ENCODE measurements at regions of chr14 and their contacts with region 1.

Region 1: GRCh38 chr14:70907176-70907995 is at the start of gene PCNX1:
- DNase-seq: peak; percentile 90
- ATAC-seq: peak; percentile 80
- H3K4me3 Mint-ChIP-seq: peak within 1 kb of the TSS; percentile 97
- H3K27ac Mint-ChIP-seq: peak within 1 kb of the TSS; percentile 92
- H3K4me1 Mint-ChIP-seq: peaks cover 64% of the 10 kb centered on the region
- H3K27me3 Mint-ChIP-seq: no peaks in the 10 kb centered on the region
- CTCF ChIP-seq: peak; percentile 76
- total RNA-seq, gene PCNX1: 32.7 to 42.6 TPM

Region 2: DNA sequence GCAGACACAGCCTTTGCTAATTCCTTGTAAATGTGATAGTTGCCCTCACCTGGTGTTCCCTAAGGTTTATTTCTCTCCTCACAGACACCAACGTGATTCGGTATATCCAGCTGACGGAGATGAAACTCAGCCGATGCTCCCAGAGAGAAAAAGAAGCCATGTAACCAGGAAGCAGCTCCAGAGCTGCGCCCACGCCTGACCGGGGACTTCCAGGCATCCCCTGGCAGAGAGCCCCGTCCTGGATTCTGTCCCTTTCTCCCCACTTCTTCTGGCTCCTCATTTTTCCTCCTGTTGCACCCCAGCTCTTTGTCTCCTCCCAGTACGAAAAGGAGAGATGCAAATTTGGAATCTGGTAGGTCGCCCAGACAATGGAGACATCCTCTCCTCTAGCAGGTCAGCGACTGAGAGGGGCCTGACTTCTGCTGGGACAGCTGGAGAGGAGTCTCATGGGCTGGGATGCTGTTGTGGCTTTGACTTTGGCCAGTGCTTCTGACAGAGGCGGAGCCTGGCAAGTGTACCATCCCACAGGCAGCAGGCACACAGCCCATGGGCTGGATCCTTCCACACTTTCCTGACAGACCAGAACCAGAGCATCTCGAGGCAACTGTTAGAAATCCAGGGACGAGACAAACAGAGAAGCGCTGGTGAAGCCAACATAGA is 236.3 kb before region 1 on chr14:
- CTCF ChIA-PET with region 1: no interaction called
- POLR2A ChIA-PET with region 1: no interaction called
- intact Hi-C with region 1: no loop called
- DNase-seq: no peak
- ATAC-seq: no peak
- H3K4me3 Mint-ChIP-seq: no peak overlapping the region
- H3K27ac Mint-ChIP-seq: no peak overlapping the region
- H3K4me1 Mint-ChIP-seq: peaks cover 10% of the 10 kb centered on the region
- H3K27me3 Mint-ChIP-seq: no peaks in the 10 kb centered on the region
- CTCF ChIP-seq: no peak

Region 3: DNA sequence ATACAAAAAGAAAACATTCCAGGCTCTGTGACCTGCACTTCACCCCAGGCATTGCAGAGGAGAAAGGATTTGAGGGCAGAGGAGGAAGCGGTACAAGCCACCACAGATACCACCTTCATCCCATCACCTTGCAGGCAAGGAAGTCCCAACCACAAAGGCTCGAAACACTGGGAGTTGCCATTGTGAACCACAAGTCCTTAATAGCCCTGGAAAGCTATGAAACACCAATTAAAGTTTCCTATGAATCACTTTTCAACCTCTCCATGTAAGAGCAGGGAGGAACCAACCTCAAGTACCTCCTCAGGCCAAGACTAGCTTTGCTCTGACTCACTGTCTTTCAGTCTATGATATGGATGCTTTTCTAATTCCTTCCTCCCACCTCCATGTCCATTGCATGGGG is 125.0 kb before region 1 on chr14:
- CTCF ChIA-PET with region 1: no interaction called
- POLR2A ChIA-PET with region 1: no interaction called
- intact Hi-C with region 1: no loop called
- DNase-seq: no peak
- ATAC-seq: no peak
- H3K4me3 Mint-ChIP-seq: no peak overlapping the region
- H3K27ac Mint-ChIP-seq: no peak overlapping the region
- H3K4me1 Mint-ChIP-seq: peaks cover 20% of the 10 kb centered on the region
- H3K27me3 Mint-ChIP-seq: no peaks in the 10 kb centered on the region
- CTCF ChIP-seq: no peak

Region 4: GRCh38 chr14:70816525-70816924 is 90.9 kb before region 1 on chr14:
- CTCF ChIA-PET with region 1: interaction called, 47 read pairs
- POLR2A ChIA-PET with region 1: interaction called, 3 read pairs
- intact Hi-C with region 1: no loop called
- DNase-seq: no peak
- ATAC-seq: no peak
- H3K4me3 Mint-ChIP-seq: no peak overlapping the region
- H3K27ac Mint-ChIP-seq: no peak overlapping the region
- H3K4me1 Mint-ChIP-seq: peaks cover 12% of the 10 kb centered on the region
- H3K27me3 Mint-ChIP-seq: peaks cover 15% of the 10 kb centered on the region
- CTCF ChIP-seq: no peak

Region 5: DNA sequence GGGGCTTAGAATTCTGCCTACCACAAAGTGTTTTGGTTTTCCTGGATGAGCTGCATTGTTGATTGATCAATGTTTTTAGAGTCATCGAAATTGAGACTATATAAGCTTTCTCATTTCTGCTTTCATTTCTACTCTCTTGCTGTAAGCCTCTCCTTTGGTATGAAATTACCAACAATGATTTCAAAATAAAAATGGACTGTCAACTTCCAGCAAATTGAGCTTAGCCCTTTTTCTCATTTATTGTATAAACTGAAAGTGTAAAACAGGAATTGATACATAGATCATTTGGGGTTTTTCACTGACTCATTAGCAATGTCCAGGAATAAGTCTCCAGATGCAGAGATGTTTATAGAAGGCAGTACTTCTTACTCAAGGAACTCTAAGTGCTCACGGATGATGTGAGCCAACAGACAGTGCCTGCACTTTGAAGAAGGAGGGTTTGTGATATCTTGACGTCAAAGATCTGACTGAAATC is 20.1 kb before region 1 on chr14:
- CTCF ChIA-PET with region 1: interaction called, 93 read pairs
- POLR2A ChIA-PET with region 1: interaction called, 163 read pairs
- intact Hi-C with region 1: no loop called
- DNase-seq: no peak
- ATAC-seq: peak; percentile 8
- H3K4me3 Mint-ChIP-seq: peak overlapping the region; percentile 50
- H3K27ac Mint-ChIP-seq: peak overlapping the region; percentile 85
- H3K4me1 Mint-ChIP-seq: peaks cover 71% of the 10 kb centered on the region
- H3K27me3 Mint-ChIP-seq: no peaks in the 10 kb centered on the region
- CTCF ChIP-seq: no peak

Region 6: DNA sequence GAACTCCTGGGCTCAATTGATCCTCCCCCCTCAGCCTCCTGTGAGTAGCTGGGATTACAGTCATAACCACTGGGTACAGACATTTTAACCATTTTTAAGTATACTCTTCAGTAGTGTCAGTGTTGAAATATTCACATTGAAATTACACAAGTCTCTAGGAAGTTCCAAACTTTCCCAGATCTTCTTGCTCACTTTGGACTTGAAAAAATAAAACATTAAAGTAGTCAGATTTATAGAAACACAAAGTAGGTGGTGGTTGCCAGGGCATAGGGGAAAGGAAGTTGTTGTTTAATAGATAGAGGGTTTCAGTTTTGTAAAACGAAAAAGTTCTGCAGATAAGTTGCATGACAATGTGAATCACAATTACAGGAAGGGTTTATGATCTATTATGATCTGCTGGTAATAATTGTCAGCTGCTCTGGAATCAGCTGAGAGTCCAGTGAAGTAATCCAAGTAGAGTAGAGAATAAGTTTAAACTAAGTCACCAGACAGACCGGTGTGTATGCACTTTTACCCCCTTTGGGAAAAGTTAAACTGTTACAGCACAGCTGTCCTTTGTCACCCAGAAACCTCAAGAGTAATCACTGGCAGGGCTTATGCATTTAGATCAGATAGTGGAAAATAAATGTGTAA is 27.2 kb after region 1 on chr14:
- CTCF ChIA-PET with region 1: interaction called, 38 read pairs
- POLR2A ChIA-PET with region 1: interaction called, 6 read pairs
- intact Hi-C with region 1: no loop called
- DNase-seq: peak; percentile 35
- ATAC-seq: peak; percentile 90
- H3K4me3 Mint-ChIP-seq: peak overlapping the region; percentile 53
- H3K27ac Mint-ChIP-seq: peak overlapping the region; percentile 90
- H3K4me1 Mint-ChIP-seq: peaks cover 71% of the 10 kb centered on the region
- H3K27me3 Mint-ChIP-seq: no peaks in the 10 kb centered on the region
- CTCF ChIP-seq: no peak

Region 7: DNA sequence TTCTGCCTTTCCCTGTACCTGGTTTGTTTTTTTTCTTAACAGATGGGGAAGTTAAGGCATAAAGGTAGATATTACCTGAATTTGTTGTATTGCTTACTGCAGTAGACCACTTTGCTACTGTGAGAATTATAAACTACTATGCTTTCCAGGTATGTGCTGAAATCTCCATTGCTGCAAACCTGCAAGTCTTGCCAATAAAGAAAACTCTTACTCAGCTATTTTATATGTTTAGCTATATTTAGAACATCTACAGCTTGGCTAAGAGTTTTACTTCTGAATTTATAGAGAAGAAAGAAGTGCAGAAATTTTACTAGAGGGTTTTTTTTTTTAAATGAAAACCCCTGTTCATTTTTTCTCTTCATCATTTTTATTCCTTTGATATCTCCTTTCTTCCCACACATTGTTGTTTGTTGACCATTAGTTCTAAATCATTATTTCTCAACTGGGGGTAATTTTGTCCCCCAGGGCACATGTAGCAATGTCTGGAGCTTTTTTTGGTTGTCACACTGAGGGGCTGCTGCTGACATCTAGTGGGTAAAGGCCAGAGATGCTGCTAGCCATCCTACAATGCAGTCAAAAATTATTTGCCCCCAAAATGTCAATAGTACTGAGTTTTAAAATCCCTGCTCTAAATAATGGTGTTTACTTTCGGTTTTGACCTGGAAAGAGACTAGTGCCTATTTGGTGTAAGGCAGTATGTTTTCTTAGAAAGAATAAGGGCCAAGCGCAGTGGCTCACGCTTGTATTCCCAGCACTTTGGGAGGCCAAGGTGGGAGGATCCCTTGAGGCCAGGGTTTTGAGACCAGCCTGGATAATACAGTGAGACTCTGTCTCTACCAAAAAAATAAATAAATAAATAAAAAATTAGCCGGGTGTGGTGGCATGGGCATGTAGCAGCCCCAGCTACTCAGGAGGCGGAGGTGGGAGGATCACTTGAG is 48.4 kb after region 1 on chr14:
- CTCF ChIA-PET with region 1: interaction called, 98 read pairs
- POLR2A ChIA-PET with region 1: interaction called, 8 read pairs
- intact Hi-C with region 1: loop called (anchors 5 kb)
- DNase-seq: peak; percentile 58
- ATAC-seq: peak; percentile 80
- H3K4me3 Mint-ChIP-seq: no peak overlapping the region
- H3K27ac Mint-ChIP-seq: no peak overlapping the region
- H3K4me1 Mint-ChIP-seq: peaks cover 37% of the 10 kb centered on the region
- H3K27me3 Mint-ChIP-seq: no peaks in the 10 kb centered on the region
- CTCF ChIP-seq: peak; percentile 78

Region 8: GRCh38 chr14:71011479-71011878 is 104.1 kb after region 1 on chr14:
- CTCF ChIA-PET with region 1: interaction called, 11 read pairs
- POLR2A ChIA-PET with region 1: no interaction called
- intact Hi-C with region 1: no loop called
- DNase-seq: no peak
- ATAC-seq: peak; percentile 37
- H3K4me3 Mint-ChIP-seq: no peak overlapping the region
- H3K27ac Mint-ChIP-seq: peak overlapping the region; percentile 13
- H3K4me1 Mint-ChIP-seq: peaks cover 33% of the 10 kb centered on the region
- H3K27me3 Mint-ChIP-seq: no peaks in the 10 kb centered on the region
- CTCF ChIP-seq: peak; percentile 52